ENCODE measurements at regions of chr10 and their contacts with region 1.

Region 1: GRCh38 chr10:76291175-76291574 is 859.8 kb downstream of the LRMDA start:
- DNase-seq: no peak
- H3K4me3 ChIP-seq: no peak overlapping the region
- H3K27ac ChIP-seq: no peak overlapping the region
- H3K4me1 ChIP-seq: peaks cover 7 to 8% of the 10 kb centered on the region in 2 donors
- H3K27me3 ChIP-seq: no peaks in the 10 kb centered on the region
- CTCF ChIP-seq: no peak
- POLR2A ChIP-seq: no peak

Region 2: DNA sequence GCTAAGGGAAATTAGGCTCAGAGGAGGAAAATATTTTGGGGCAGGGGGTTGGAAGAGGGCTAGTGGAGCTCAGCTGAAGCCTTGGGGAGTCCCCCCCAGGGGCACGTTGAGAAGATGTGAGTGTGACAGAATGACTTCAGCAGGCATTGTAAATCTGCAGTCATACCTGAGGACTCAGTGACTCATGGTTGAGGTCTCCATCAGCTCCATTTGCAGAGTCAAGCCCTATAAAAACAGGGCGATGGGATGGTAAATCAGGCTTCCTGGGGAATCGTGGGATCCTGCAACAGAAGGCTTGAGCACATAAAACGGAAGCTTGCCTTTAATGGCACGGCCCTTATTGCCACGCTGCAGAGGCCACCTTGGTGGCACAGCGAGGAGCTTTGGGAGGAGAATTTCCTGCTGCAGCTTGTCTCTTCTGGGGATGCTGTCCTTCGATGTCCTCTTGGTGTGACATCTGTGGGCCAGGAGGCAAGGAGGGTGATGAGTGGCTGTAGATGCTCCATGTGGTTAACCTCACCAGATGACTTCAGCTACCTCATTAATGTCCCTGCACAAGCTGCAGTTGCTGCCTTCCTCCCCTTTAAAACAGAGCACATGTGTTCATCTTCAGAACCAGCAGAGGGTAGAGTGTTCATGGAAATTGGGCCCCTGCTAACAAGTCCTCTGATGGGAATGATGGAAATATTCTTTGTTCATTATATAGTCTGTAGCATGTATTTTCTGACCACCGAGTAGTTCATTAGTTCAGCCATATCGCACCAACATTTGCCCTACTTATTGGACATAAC is 573.9 kb before region 1 on chr10:
- intact Hi-C with region 1: loop called in 1 of 2 experiments (anchors 5 kb)
- DNase-seq: no peak
- H3K4me3 ChIP-seq: no peak overlapping the region
- H3K27ac ChIP-seq: no peak overlapping the region
- H3K4me1 ChIP-seq: no peaks in the 10 kb centered on the region
- H3K27me3 ChIP-seq: no peaks in the 10 kb centered on the region
- CTCF ChIP-seq: no peak
- POLR2A ChIP-seq: no peak

Region 3: DNA sequence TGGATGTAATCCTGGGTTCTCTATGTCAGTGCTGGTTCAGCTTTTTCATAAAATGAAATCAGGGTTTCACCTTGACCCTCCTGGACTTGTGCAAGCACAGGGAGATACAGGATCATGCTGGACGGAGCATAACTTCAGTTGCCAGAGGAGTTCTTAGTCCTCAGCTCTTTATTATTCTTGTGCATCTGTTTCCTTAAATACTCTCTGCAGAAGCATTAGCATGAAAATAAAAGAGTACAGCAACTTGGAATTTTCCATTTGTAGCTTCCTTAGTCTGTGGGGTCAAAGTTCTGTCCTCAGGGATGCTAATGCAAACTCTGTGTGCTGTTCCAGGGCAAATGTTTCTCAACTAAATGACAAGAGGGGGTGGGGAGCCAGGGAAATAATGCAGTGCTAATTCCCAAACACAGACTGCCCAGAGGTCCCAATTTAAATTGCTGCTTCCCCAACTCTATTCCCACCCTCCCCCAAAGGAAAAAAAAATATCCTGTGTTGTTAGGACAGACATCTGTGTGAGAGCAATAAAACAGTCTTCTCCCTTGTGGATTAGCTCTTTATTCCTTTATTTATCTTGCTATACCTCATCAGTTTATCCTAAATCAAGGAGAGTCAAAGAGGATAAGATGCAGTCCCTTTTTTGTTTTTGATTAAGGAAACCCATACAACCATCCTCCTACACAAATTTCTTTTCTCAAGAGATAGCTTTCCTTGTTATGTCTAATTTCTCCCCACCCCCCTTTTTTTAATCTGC is 45.2 kb after region 1 on chr10:
- intact Hi-C with region 1: no loop called
- DNase-seq: peak in 3 of 7 donors; percentile 17 to 31 (median 26)
- H3K4me3 ChIP-seq: no peak overlapping the region
- H3K27ac ChIP-seq: peak overlapping the region in 2 of 5 donors; percentile 37 to 72
- H3K4me1 ChIP-seq: peaks cover 19% of the 10 kb centered on the region in 2 donors
- H3K27me3 ChIP-seq: no peaks in the 10 kb centered on the region
- CTCF ChIP-seq: no peak
- POLR2A ChIP-seq: no peak